Esophagus muscularis mucosa (tissue), 4 donors: ENCODE measurements at regions of chr18 and their contacts with region 1.

Region 1: GRCh38 chr18:48161191-48161910 is 230.9 kb upstream of the SMAD2 start:
- DNase-seq: no peak
- H3K4me3 ChIP-seq: peak overlapping the region; percentile 63 to 82 (median 76)
- H3K27ac ChIP-seq: peak overlapping the region; percentile 90 to 94 (median 92)
- H3K4me1 ChIP-seq: peaks cover 11 to 41% (median 30%) of the 10 kb centered on the region in 4 donors
- H3K27me3 ChIP-seq: no peaks in the 10 kb centered on the region
- CTCF ChIP-seq: no peak
- EP300 ChIP-seq: no peak
- POLR2A ChIP-seq: no peak

Region 2: GRCh38 chr18:48410095-48410920 is 249.0 kb after region 1 on chr18:
- intact Hi-C with region 1: loop called (anchors 5 kb)
- DNase-seq: peak; percentile 96
- H3K4me3 ChIP-seq: peak overlapping the region; percentile 81 to 87 (median 86)
- H3K27ac ChIP-seq: peak overlapping the region; percentile 81 to 92 (median 86)
- H3K4me1 ChIP-seq: peaks cover 16 to 43% (median 28%) of the 10 kb centered on the region in 4 donors
- H3K27me3 ChIP-seq: peaks cover 0 to 52% (median 0%) of the 10 kb centered on the region in 4 donors
- CTCF ChIP-seq: peak in 1 of 3 experiments; percentile 12
- EP300 ChIP-seq: no peak
- POLR2A ChIP-seq: peak; percentile 51

Region 3: GRCh38 chr18:48493434-48494230 is 332.3 kb after region 1 on chr18:
- intact Hi-C with region 1: no loop called
- DNase-seq: peak; percentile 74
- H3K4me3 ChIP-seq: no peak overlapping the region
- H3K27ac ChIP-seq: peak overlapping the region in 1 of 4 donors; percentile 63
- H3K4me1 ChIP-seq: peaks cover 0 to 17% (median 13%) of the 10 kb centered on the region in 4 donors
- H3K27me3 ChIP-seq: no peaks in the 10 kb centered on the region
- CTCF ChIP-seq: no peak
- EP300 ChIP-seq: no peak
- POLR2A ChIP-seq: no peak